Left colon (tissue), 2 donors: ENCODE measurements at regions of chr21 and their contacts with region 1.

Region 1: DNA sequence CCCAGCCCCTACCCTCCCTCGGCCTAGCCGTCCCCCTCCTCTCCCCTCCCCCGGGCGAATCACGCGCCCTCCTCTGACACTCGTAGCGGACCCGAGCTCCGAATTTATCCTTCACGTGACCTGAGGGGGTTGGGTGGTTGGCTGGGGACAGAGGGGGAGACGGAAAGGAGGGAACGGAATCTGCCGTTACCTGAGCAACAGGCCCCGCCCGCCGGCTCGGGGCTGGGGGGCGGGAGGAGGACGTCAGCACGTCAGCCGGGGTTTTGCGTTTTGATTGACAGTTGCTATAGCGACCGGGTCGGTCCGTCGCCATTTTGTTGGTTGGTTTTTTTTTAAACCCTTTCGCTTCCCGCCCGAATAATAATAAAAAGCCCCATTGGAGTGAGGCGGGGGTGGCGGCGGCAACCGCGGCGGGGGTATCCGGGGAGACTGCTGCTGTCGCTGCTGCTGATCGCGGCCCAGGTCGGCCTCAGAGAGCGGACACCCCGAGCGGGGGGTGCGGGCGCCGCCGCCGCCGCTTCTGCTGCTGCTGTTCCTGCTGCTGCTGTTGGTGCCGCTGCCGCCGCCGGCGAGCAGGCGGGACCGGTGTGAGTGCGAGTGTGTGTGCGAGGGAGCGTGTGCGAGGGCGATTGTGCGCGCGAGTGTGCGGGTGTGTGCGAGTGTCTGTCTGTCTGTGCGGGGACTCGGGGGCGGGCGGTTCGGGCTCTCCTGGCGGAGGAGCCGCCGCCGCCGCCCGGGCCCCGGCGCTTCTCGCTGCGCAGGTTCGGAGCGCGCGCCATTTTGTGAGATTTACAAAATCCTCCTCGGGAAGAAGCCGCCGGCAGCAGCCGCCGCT is at the start of gene DYRK1A:
- DNase-seq: peak; percentile 97 to 99
- ATAC-seq: peak; percentile 88
- total RNA-seq, gene DYRK1A: 62.0 to 62.1 TPM

Region 2: GRCh38 chr21:36175771-36176565 is 1190.7 kb before region 1 on chr21:
- intact Hi-C with region 1: no loop called
- DNase-seq: no peak
- ATAC-seq: peak; percentile 53

Region 3: DNA sequence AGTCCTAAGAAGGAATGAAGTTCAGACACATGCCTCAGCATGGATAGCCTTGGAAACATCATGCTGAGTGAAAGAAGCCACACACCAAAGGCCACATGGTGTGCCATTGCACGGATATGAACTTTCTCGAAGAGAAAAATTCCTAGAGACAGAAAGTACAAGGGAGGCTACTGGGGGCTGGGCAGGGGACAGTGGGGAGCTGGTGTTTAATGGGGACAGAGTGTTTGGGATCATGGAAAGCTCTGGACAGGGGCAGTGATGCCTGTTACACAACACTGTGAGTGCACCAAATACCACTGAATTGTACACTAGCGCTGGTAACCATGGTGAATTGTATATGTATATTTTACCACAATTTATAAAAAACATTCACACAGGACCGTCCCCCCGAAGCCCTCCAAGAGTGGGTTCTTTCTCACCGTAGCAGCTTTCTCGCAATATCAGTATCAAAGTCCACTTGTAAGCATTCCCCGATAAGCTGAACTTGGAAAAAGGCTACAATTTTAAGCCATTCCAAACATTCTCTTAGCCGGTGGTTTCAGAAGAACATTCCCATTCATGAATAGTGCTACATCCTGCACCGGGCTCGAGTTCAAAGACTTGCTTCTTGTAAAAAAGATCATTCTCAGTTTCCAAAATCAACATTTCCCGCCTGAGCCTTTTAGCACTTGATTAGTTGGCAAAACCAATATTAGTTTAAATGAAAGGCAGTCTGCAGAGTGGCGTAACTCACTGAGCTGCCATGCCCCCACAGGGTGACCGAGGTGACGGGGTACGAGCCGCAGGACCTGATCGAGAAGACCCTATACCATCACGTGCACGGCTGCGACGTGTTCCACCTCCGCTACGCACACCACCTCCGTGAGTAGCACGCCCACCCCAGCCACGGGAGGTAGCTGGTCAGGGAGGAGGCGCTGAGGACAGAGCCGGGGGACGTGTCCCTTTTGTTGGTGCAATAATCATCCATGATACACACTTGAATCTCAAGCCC is 636.1 kb before region 1 on chr21:
- intact Hi-C with region 1: no loop called
- DNase-seq: no peak
- ATAC-seq: no peak

Region 4: GRCh38 chr21:37267269-37268184 is 99.2 kb before region 1 on chr21 and contains the start of gene VPS26C:
- intact Hi-C with region 1: loop called in 1 of 2 experiments (anchors 5 kb)
- DNase-seq: peak; percentile 99
- ATAC-seq: peak; percentile 85
- total RNA-seq, gene VPS26C: 67.8 to 69.6 TPM

Region 5: GRCh38 chr21:37546949-37547614 is 180.4 kb after region 1 on chr21:
- intact Hi-C with region 1: no loop called
- DNase-seq: no peak
- ATAC-seq: peak; percentile 17

Region 6: DNA sequence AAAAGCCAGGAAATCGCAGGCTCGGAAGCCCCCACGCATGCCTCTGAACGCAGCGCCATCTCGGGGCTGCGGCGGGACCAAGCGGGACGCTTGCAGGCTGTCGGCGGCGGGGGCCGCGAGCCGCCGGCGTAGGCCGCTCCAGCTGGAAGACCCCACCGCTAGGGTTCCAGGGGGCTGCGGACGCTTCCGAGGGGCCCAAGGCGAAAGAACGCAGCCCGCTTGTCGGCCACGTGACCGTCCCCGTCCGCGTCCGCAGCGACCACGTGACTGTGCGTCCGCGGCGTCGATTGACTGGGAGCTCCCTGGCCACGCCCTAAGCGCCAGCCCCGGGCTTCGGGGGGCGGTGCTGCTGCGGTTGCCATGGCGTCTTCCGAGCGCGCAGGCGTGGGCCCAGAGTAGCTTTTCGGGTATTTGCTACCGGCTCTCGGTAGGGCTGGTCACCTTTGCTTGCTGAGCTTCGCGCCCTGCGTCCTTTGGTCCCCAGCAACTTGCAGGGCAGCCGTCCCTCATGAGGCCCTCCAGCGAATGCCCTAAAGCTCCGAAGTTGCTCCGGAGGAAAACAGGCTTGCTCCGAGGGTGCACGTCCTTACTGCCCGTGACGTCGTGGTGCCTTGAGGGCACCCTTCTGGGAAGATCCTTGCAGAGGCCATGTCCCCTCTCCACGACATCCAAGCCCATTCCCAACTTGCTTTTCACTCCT is 197.1 kb after region 1 on chr21:
- intact Hi-C with region 1: loop called in 1 of 2 experiments (anchors 10 kb)
- DNase-seq: peak; percentile 93 to 95
- ATAC-seq: peak; percentile 95

Region 7: DNA sequence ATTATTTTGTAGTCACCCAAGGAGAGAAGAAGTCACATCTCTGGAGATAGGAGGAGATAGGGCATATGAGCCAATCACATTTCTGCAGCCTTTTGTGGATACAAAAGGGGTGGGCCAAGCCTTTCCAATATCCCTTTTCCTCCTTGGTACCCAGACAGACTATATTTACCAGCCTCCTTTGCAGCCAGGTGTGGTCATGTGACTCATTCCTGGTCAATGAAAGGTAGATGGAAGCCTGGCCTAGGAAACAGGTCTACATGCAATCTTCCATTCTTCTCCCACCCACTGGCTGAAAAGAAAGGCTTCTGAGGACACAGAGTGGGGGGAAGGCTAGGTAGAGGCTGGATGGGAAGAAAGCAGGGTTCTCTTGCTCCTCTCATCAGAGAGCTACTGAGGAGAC is 1189.7 kb after region 1 on chr21:
- intact Hi-C with region 1: no loop called
- DNase-seq: no peak
- ATAC-seq: no peak